T-cell (primary cell): ENCODE measurements at regions of chr6 and their contacts with region 1.

Region 1: DNA sequence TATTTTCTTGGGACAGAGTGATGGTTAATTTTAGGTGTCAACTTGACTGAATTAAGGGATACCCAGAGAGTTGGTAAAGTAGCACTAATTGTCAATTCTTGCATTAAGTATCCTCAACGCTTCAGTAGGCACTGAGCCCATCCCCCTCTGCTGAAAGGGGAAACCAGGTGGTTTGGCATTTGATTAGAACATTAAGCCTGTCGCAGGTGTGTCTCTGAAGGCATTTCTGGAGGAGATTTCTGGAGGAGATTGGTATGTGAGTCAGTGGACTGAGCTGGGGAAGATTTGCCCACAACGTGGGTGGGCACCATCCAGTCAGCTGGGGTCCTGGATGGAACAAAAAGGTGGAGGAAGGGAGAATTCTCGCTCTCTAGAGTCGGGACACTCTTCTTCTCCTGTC is 119.8 kb downstream of the RFX6 start:
- DNase-seq: no peak
- ATAC-seq: no peak
- H3K4me3 ChIP-seq: no peak overlapping the region
- H3K4me3 Mint-ChIP-seq: no peak overlapping the region
- H3K27ac ChIP-seq: no peak overlapping the region
- H3K27ac Mint-ChIP-seq: no peak overlapping the region
- H3K4me1 ChIP-seq: no peaks in the 10 kb centered on the region
- H3K4me1 Mint-ChIP-seq: no peaks in the 10 kb centered on the region
- H3K27me3 ChIP-seq: no peaks in the 10 kb centered on the region
- H3K27me3 Mint-ChIP-seq: no peaks in the 10 kb centered on the region

Region 2: DNA sequence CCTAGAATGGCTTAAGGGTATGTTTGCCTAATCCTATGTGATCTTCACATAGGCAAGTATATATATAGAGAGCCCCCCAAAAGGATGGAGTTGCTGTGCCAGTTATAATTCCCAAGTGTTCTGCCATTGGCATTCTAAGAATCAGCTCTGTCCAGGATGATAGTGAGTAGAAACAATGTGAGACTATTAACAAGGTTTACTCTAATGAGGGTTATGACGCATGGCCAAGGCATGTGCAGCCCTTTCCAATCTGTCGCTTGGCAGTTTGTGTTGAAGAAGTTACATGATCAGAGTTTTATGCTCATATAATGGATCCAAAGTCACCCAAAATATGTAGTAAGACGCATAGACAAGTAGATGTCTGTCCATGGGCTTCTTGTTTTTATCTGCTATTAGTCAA is 302.1 kb after region 1 on chr6:
- CTCF ChIA-PET with region 1: no interaction called
- POLR2A ChIA-PET with region 1: interaction called in 1 of 2 experiments, 13 read pairs
- DNase-seq: no peak
- ATAC-seq: no peak
- H3K4me3 ChIP-seq: no peak overlapping the region
- H3K4me3 Mint-ChIP-seq: no peak overlapping the region
- H3K27ac ChIP-seq: no peak overlapping the region
- H3K27ac Mint-ChIP-seq: no peak overlapping the region
- H3K4me1 ChIP-seq: no peaks in the 10 kb centered on the region
- H3K4me1 Mint-ChIP-seq: no peaks in the 10 kb centered on the region
- H3K27me3 ChIP-seq: no peaks in the 10 kb centered on the region
- H3K27me3 Mint-ChIP-seq: peaks cover 0 to 10% of the 10 kb centered on the region in 2 donors